ENCODE measurements at regions of chr2 and their contacts with region 1.

Region 1: DNA sequence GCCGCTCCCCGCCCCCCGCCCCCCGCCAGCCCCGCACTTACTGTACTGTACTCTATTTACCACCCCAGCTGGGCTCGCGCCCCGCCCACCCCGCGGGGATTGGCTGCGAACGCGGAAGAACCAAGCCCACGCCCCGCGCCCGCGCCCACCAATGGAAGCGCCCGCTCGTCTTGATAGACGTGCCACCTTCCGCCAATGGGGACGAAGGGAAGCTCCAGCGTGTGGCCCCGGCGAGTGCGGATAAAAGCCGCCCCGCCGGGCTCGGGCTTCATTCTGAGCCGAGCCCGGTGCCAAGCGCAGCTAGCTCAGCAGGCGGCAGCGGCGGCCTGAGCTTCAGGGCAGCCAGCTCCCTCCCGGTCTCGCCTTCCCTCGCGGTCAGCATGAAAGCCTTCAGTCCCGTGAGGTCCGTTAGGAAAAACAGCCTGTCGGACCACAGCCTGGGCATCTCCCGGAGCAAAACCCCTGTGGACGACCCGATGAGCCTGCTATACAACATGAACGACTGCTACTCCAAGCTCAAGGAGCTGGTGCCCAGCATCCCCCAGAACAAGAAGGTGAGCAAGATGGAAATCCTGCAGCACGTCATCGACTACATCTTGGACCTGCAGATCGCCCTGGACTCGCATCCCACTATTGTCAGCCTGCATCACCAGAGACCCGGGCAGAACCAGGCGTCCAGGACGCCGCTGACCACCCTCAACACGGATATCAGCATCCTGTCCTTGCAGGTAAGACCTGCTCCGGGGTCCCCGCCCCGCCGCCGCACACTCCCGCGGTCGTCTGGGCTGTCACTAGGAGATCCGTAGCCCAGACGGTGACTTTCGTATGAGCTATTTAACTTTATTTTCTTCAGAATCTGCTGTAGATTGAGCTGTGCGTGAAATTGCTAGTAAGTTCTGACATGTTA is at the start of gene ID2:
- DNase-seq: peak; percentile 96 to 99 (median 99)
- ATAC-seq: peak; percentile 83
- H3K4me3 ChIP-seq: peak within 1 kb of the TSS; percentile 89
- H3K4me3 Mint-ChIP-seq: peak within 1 kb of the TSS; percentile 89 to 100 (median 98)
- H3K27ac ChIP-seq: peak within 1 kb of the TSS; percentile 81
- H3K27ac Mint-ChIP-seq: peak within 1 kb of the TSS; percentile 89 to 97 (median 95)
- H3K4me1 ChIP-seq: peaks cover 10 to 24% of the 10 kb centered on the region in 2 donors
- H3K4me1 Mint-ChIP-seq: peaks cover 24 to 49% (median 43%) of the 10 kb centered on the region in 7 donors
- H3K27me3 ChIP-seq: peaks cover 0 to 18% of the 10 kb centered on the region in 2 donors
- H3K27me3 Mint-ChIP-seq: peaks cover 12 to 24% (median 20%) of the 10 kb centered on the region in 5 donors
- total RNA-seq, gene ID2: 43.0 to 185 (median 77.1) TPM

Region 2: GRCh38 chr2:6865346-6866274 is 1816.4 kb before region 1 on chr2 and contains the start of gene CMPK2:
- CTCF ChIA-PET with region 1: no interaction called
- POLR2A ChIA-PET with region 1: interaction called, 3 read pairs
- intact Hi-C with region 1: loop called in 1 of 2 experiments (anchors 5 kb)
- DNase-seq: peak; percentile 63 to 84 (median 79)
- ATAC-seq: peak; percentile 81
- H3K4me3 ChIP-seq: peak within 1 kb of the TSS; percentile 69
- H3K4me3 Mint-ChIP-seq: peak within 1 kb of the TSS; percentile 93 to 100 (median 96)
- H3K27ac ChIP-seq: peak within 1 kb of the TSS; percentile 68
- H3K27ac Mint-ChIP-seq: peak within 1 kb of the TSS; percentile 85 to 100 (median 91)
- H3K4me1 ChIP-seq: peaks cover 6% of the 10 kb centered on the region in 2 donors
- H3K4me1 Mint-ChIP-seq: peaks cover 18 to 62% (median 29%) of the 10 kb centered on the region in 7 donors
- H3K27me3 ChIP-seq: no peaks in the 10 kb centered on the region
- H3K27me3 Mint-ChIP-seq: peaks cover 0 to 2% (median 0%) of the 10 kb centered on the region in 5 donors
- total RNA-seq, gene CMPK2: 4.0 to 63.0 (median 6.6) TPM

Region 3: DNA sequence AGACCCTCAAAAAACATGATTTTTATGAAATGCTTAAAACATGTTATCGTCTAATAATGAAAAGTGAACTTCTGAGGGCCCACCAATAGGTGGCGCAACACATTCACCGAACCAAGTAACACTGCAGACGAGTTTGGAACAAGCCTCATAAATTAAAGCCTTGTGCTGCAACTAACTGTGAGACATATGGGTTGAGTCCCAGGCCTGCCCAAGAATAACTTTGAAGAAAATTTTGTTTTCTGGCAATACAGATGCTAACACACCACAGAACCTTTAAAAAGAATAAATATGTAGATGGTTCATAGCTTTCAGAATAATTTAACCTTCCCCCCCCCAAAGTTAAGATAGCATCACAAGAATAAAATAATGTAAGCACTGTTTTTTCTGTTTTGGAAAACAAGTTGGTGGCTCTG is 1479.0 kb before region 1 on chr2:
- CTCF ChIA-PET with region 1: interaction called, 8 read pairs
- POLR2A ChIA-PET with region 1: interaction called, 6 read pairs
- intact Hi-C with region 1: loop called (anchors 1 kb)
- DNase-seq: peak; percentile 31 to 65 (median 55)
- ATAC-seq: peak; percentile 81
- H3K4me3 ChIP-seq: no peak overlapping the region
- H3K4me3 Mint-ChIP-seq: no peak overlapping the region
- H3K27ac ChIP-seq: no peak overlapping the region
- H3K27ac Mint-ChIP-seq: no peak overlapping the region
- H3K4me1 ChIP-seq: no peaks in the 10 kb centered on the region
- H3K4me1 Mint-ChIP-seq: peaks cover 0 to 6% (median 0%) of the 10 kb centered on the region in 7 donors
- H3K27me3 ChIP-seq: no peaks in the 10 kb centered on the region
- H3K27me3 Mint-ChIP-seq: no peaks in the 10 kb centered on the region

Region 4: DNA sequence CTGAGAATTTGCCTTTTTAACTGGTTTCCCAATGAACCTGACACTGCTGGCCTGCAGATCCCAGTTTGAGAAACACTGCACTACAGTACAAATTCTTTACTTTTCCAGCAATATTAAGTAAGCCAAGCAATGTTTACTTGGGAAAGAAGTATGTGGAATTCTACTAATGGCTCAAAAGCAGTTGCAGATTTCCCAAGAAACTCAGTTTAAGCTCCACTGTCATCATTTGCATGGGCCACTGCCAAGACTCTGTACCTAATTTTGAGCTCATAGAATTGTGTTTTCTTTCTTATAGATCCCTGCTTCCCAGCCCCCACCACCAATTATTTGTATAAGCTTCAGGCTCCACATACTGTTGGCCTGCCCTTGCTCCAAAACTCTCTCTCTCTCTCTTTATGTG is 1088.7 kb before region 1 on chr2:
- CTCF ChIA-PET with region 1: interaction called, 8 read pairs
- POLR2A ChIA-PET with region 1: interaction called, 6 read pairs
- intact Hi-C with region 1: loop called in 1 of 2 experiments (anchors 5 kb)
- DNase-seq: no peak
- ATAC-seq: no peak
- H3K4me3 ChIP-seq: no peak overlapping the region
- H3K4me3 Mint-ChIP-seq: no peak overlapping the region
- H3K27ac ChIP-seq: no peak overlapping the region
- H3K27ac Mint-ChIP-seq: peak overlapping the region in 1 of 9 donors; percentile 57
- H3K4me1 ChIP-seq: no peaks in the 10 kb centered on the region
- H3K4me1 Mint-ChIP-seq: peaks cover 2 to 21% (median 11%) of the 10 kb centered on the region in 7 donors
- H3K27me3 ChIP-seq: no peaks in the 10 kb centered on the region
- H3K27me3 Mint-ChIP-seq: peaks cover 0 to 4% (median 0%) of the 10 kb centered on the region in 5 donors

Region 5: DNA sequence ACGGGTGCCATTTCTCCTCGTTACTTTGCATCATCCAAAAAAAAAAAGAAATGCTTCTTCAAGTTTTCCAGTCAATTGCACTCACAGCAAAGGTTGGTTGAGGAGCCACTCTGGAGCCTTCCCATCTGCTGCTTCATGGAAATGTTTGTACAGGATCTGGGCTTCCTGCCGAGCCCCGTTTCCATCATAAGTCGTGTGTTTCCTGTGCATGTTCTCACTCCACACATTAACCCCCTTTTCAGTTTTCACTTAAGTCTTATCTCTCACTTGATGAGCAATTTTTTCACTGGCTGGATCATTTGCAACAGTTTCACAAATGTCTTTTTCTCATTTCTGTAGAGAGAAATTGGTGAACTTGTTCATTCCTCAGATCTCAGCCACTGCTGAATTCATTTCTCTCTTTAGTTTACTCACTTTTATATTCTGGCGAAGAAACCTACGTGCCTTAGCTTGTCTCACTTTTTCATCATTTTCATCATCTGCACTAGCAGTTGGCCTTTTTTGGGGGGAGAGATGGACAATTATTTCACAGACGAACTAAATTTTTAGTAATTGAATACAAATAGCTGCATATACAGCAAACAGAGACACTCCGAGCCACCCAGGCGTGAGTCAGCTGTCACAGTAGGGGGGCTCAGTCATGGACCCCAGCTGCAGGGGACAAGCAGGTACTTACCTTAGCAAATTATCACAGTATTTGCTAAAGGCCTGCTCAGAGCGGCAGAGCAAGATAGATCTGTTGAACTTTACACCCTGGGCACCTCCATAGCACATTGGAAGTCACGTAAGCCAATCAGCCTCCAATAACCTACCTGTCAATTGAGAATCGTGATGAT is 751.0 kb before region 1 on chr2:
- CTCF ChIA-PET with region 1: no interaction called
- POLR2A ChIA-PET with region 1: no interaction called
- intact Hi-C with region 1: no loop called
- DNase-seq: no peak
- ATAC-seq: no peak
- H3K4me3 ChIP-seq: no peak overlapping the region
- H3K4me3 Mint-ChIP-seq: no peak overlapping the region
- H3K27ac ChIP-seq: no peak overlapping the region
- H3K27ac Mint-ChIP-seq: peak overlapping the region in 1 of 9 donors; percentile 35
- H3K4me1 ChIP-seq: peaks cover 0 to 3% of the 10 kb centered on the region in 2 donors
- H3K4me1 Mint-ChIP-seq: peaks cover 0 to 5% (median 0%) of the 10 kb centered on the region in 7 donors
- H3K27me3 ChIP-seq: no peaks in the 10 kb centered on the region
- H3K27me3 Mint-ChIP-seq: peaks cover 0 to 4% (median 0%) of the 10 kb centered on the region in 5 donors

Region 6: DNA sequence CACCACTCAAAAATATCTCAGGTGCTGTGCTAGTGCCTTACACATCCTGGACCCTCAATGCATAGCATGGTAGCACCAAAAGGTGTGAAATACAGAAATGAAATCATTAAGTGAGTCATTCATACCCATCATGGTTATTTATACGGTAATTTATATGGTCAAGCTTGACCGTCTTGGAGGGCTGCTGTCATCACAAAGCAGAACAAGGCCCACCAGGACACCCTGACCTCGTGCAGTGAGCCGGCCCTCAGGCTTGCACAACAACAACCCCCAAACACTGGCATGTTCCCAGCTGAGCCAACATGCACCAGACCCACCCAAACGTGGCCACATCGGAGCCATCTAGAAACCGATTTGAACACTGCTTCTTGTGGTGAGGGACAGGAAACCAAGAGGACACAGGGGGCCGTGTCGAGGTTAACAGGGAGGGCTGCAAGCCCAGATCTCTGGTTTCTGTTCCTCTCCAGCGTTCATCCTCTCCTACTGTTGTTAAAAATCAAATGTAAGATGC is 378.7 kb before region 1 on chr2:
- CTCF ChIA-PET with region 1: no interaction called
- POLR2A ChIA-PET with region 1: no interaction called
- intact Hi-C with region 1: loop called (anchors 1 to 5 kb)
- DNase-seq: peak in 8 of 9 donors; percentile 10 to 73 (median 54)
- ATAC-seq: peak; percentile 75
- H3K4me3 ChIP-seq: peak overlapping the region; percentile 34
- H3K4me3 Mint-ChIP-seq: peak overlapping the region in 9 of 10 donors; percentile 3 to 77 (median 50)
- H3K27ac ChIP-seq: no peak overlapping the region
- H3K27ac Mint-ChIP-seq: peak overlapping the region in 6 of 9 donors; percentile 15 to 85 (median 47)
- H3K4me1 ChIP-seq: peaks cover 14 to 53% of the 10 kb centered on the region in 2 donors
- H3K4me1 Mint-ChIP-seq: peaks cover 25 to 88% (median 39%) of the 10 kb centered on the region in 7 donors
- H3K27me3 ChIP-seq: no peaks in the 10 kb centered on the region
- H3K27me3 Mint-ChIP-seq: no peaks in the 10 kb centered on the region

Region 7: GRCh38 chr2:8574144-8575037 is 107.6 kb before region 1 on chr2:
- CTCF ChIA-PET with region 1: interaction called, 3 read pairs
- POLR2A ChIA-PET with region 1: interaction called, 3 read pairs
- intact Hi-C with region 1: loop called in 1 of 2 experiments (anchors 2 kb)
- DNase-seq: peak in 1 of 9 donors; percentile 18
- ATAC-seq: no peak
- H3K4me3 ChIP-seq: no peak overlapping the region
- H3K4me3 Mint-ChIP-seq: peak overlapping the region; percentile 32 to 77 (median 60)
- H3K27ac ChIP-seq: no peak overlapping the region
- H3K27ac Mint-ChIP-seq: no peak overlapping the region
- H3K4me1 ChIP-seq: peaks cover 20 to 23% of the 10 kb centered on the region in 2 donors
- H3K4me1 Mint-ChIP-seq: peaks cover 27 to 34% (median 33%) of the 10 kb centered on the region in 7 donors
- H3K27me3 ChIP-seq: no peaks in the 10 kb centered on the region
- H3K27me3 Mint-ChIP-seq: peaks cover 0 to 18% (median 9%) of the 10 kb centered on the region in 5 donors

Region 8: GRCh38 chr2:8836971-8837794 is 155.1 kb after region 1 on chr2 and contains the start of gene KIDINS220:
- CTCF ChIA-PET with region 1: no interaction called
- POLR2A ChIA-PET with region 1: no interaction called
- intact Hi-C with region 1: loop called (anchors 1 to 2 kb)
- DNase-seq: peak; percentile 71 to 87 (median 82)
- ATAC-seq: peak; percentile 99
- H3K4me3 ChIP-seq: peak within 1 kb of the TSS; percentile 69
- H3K4me3 Mint-ChIP-seq: peak within 1 kb of the TSS; percentile 96 to 100 (median 99)
- H3K27ac ChIP-seq: peak within 1 kb of the TSS; percentile 78
- H3K27ac Mint-ChIP-seq: peak within 1 kb of the TSS; percentile 94 to 100 (median 98)
- H3K4me1 ChIP-seq: peaks cover 23 to 29% of the 10 kb centered on the region in 2 donors
- H3K4me1 Mint-ChIP-seq: peaks cover 26 to 60% (median 51%) of the 10 kb centered on the region in 7 donors
- H3K27me3 ChIP-seq: no peaks in the 10 kb centered on the region
- H3K27me3 Mint-ChIP-seq: peaks cover 0 to 5% (median 0%) of the 10 kb centered on the region in 5 donors
- total RNA-seq, gene KIDINS220: 34.5 to 54.3 (median 48.3) TPM